Caco-2 (cell line): ENCODE measurements at regions of chr1 and their contacts with region 1.

Region 1: DNA sequence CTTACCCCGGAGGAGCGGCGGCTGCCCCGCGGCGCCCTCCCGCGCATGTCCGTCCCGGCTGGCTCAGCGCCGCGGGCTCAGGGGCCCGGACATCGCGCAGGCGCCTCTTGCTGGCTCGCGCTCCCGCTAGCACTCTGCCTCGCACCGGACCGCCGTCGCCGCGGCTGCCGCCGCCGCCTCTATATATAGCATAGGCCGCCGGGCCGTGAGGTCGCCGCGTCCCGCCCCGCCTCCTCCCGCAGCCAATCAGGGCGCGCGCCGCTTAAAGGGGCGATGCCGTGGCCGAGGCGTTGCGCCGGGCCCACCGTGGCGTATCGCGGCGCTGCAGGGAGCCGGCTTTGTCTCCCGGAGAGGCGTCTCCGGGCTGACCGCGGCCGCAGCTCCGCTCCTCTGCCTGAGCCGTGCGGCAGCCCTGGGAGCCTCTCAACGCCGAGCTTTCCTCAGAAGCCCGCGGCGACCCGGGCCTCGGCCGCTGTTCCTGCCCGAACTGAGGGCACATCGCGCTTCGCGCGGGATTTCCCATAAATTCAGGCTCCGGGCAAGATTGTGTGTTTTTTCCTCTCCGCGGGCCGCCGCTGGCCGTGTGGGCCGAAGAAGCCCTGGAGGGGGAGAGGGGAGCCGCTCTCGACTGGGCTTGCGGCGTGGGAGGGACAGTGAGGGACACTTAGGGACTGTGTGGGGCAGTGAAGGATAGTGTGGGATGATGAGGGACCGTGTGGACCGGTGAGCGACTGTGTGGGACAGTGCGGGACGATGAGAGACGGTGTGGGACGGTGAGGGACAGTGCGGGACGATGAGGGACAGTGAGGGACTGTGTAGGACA is at the start of gene ERRFI1:
- DNase-seq: peak; percentile 91 to 97
- H3K4me3 ChIP-seq: peak within 1 kb of the TSS; percentile 50
- H3K4me3 Mint-ChIP-seq: peak within 1 kb of the TSS; percentile 89
- H3K27ac Mint-ChIP-seq: peak within 1 kb of the TSS; percentile 88
- H3K4me1 ChIP-seq: peaks cover 43% of the 10 kb centered on the region
- H3K4me1 Mint-ChIP-seq: peaks cover 38% of the 10 kb centered on the region
- H3K27me3 ChIP-seq: no peaks in the 10 kb centered on the region
- H3K27me3 Mint-ChIP-seq: no peaks in the 10 kb centered on the region
- CTCF ChIP-seq: no peak
- total RNA-seq, gene ERRFI1: 37.2 and 40.9 TPM in 2 replicates

Region 2: DNA sequence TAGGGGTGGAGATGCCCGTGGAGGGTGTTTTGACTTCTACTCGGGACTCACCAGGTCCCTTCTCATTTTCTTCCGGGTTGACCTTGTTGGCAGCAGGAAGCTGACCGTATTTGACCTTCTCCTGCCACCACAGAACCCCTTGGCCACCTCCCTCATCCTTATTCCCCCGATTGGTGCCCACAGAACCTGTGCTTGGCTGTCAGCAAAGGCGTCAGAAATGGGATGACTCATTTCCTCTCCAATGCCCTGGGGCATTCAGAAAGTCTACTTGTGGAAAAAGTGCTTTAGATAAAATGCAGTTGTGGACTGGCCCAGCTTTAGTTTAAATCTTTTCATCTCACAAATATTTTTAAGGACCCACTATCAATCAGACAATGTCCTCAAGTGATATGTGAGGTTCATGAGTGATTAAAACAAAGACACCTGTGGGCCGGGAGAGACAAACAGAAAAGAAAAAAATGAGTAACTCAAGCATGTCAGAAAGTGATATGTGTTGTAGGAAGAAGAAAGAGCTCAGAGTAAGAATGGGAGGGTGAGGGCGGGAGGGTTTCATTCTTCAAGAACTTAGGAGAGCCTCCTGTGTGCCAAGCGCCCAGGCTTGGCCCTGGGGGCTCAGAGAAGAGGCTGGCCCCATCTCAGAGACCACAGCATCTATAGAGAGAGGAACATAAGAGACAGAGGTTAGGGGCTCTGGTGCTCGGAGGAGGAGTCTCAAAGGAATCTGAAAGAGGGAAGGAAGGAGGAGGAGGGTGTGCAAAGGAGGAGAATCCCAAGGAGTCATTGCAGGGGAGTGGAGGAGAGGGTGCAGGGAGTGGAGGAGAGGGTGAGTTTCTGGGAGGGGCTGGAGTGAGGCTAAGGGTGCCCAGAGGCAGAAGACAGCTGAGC is 476.8 kb before region 1 on chr1:
- CTCF ChIA-PET with region 1: no interaction called
- POLR2A ChIA-PET with region 1: no interaction called
- intact Hi-C with region 1: no loop called
- DNase-seq: no peak
- H3K4me3 ChIP-seq: no peak overlapping the region
- H3K4me3 Mint-ChIP-seq: no peak overlapping the region
- H3K27ac Mint-ChIP-seq: no peak overlapping the region
- H3K4me1 ChIP-seq: no peaks in the 10 kb centered on the region
- H3K4me1 Mint-ChIP-seq: peaks cover 7% of the 10 kb centered on the region
- H3K27me3 ChIP-seq: no peaks in the 10 kb centered on the region
- H3K27me3 Mint-ChIP-seq: peaks cover 8% of the 10 kb centered on the region
- CTCF ChIP-seq: no peak

Region 3: GRCh38 chr1:7983086-7983778 is 43.1 kb before region 1 on chr1:
- CTCF ChIA-PET with region 1: no interaction called
- POLR2A ChIA-PET with region 1: no interaction called
- intact Hi-C with region 1: loop called (anchors 5 kb)
- DNase-seq: no peak
- H3K4me3 ChIP-seq: no peak overlapping the region
- H3K4me3 Mint-ChIP-seq: no peak overlapping the region
- H3K27ac Mint-ChIP-seq: no peak overlapping the region
- H3K4me1 ChIP-seq: peaks cover 11% of the 10 kb centered on the region; the same call in 1 of the 2 replicates
- H3K4me1 Mint-ChIP-seq: peaks cover 7% of the 10 kb centered on the region
- H3K27me3 ChIP-seq: no peaks in the 10 kb centered on the region
- H3K27me3 Mint-ChIP-seq: no peaks in the 10 kb centered on the region
- CTCF ChIP-seq: no peak

Region 4: GRCh38 chr1:8061210-8061609 is 34.8 kb after region 1 on chr1:
- CTCF ChIA-PET with region 1: no interaction called
- POLR2A ChIA-PET with region 1: interaction called, 5 read pairs
- intact Hi-C with region 1: loop called (anchors 1 kb)
- DNase-seq: peak; percentile 80 to 84
- H3K4me3 ChIP-seq: no peak overlapping the region
- H3K4me3 Mint-ChIP-seq: peak overlapping the region; percentile 57
- H3K27ac Mint-ChIP-seq: peak overlapping the region; percentile 95
- H3K4me1 ChIP-seq: peaks cover 27% of the 10 kb centered on the region
- H3K4me1 Mint-ChIP-seq: peaks cover 8% of the 10 kb centered on the region
- H3K27me3 ChIP-seq: no peaks in the 10 kb centered on the region
- H3K27me3 Mint-ChIP-seq: no peaks in the 10 kb centered on the region
- CTCF ChIP-seq: no peak

Region 5: DNA sequence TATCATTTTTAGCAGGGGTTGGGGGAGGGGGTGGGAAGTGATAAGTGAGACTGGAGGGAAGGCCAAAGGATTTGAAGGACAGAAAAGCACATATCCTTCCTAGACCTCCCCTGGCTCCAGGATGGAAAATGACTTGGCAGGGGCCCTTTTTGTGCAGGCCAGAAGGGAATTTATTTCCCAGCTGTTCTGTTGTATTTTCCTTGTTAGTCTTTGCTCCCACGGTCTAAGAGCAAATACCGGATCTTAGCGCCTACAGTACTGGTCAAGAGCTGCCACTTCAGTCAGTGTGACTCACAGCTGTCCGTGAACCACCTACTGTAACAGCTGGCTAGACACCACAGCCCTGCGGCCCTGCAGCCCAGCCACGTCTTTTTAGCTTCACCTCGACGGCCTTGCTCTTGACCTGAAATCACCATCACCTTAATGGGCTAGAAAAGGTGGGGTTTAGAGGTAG is 50.8 kb after region 1 on chr1:
- CTCF ChIA-PET with region 1: no interaction called
- POLR2A ChIA-PET with region 1: interaction called, 3 read pairs
- intact Hi-C with region 1: loop called (anchors 5 kb)
- DNase-seq: peak; percentile 45 to 77
- H3K4me3 ChIP-seq: no peak overlapping the region
- H3K4me3 Mint-ChIP-seq: no peak overlapping the region
- H3K27ac Mint-ChIP-seq: peak overlapping the region; percentile 84
- H3K4me1 ChIP-seq: peaks cover 64% of the 10 kb centered on the region
- H3K4me1 Mint-ChIP-seq: peaks cover 53% of the 10 kb centered on the region
- H3K27me3 ChIP-seq: no peaks in the 10 kb centered on the region
- H3K27me3 Mint-ChIP-seq: no peaks in the 10 kb centered on the region
- CTCF ChIP-seq: no peak

Region 6: GRCh38 chr1:8169364-8170058 is 143.1 kb after region 1 on chr1:
- CTCF ChIA-PET with region 1: no interaction called
- POLR2A ChIA-PET with region 1: interaction called, 11 read pairs
- intact Hi-C with region 1: loop called (anchors 1 kb)
- DNase-seq: peak; percentile 72 to 82
- H3K4me3 ChIP-seq: no peak overlapping the region
- H3K4me3 Mint-ChIP-seq: peak overlapping the region; percentile 53
- H3K27ac Mint-ChIP-seq: peak overlapping the region; percentile 91
- H3K4me1 ChIP-seq: peaks cover 27% of the 10 kb centered on the region
- H3K4me1 Mint-ChIP-seq: peaks cover 11% of the 10 kb centered on the region
- H3K27me3 ChIP-seq: no peaks in the 10 kb centered on the region
- H3K27me3 Mint-ChIP-seq: no peaks in the 10 kb centered on the region
- CTCF ChIP-seq: no peak

Region 7: DNA sequence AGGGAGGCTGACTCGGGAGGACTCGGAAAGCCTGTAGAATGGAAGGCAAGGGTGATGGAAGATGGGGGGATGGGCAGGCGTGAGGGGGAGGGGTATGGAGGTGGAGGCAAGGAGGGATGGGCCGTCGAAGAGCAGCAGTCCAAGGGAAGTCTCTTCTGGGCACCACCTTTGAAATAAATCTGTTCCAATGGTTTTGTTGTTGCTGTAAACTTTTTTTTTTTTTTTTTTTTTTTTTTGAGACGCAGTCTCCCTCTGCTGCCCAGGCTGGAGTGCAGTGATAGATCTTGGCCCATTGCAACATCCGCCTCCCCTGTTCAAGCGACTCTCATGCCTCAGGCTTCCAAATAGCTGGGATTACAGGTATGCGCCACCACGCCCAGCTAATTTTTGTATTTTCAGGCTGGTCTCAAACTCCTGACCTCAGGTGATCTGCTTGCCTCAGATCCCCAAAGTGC is 212.5 kb after region 1 on chr1:
- CTCF ChIA-PET with region 1: no interaction called
- POLR2A ChIA-PET with region 1: no interaction called
- intact Hi-C with region 1: loop called (anchors 1 kb)
- DNase-seq: peak; percentile 73 to 85
- H3K4me3 ChIP-seq: no peak overlapping the region
- H3K4me3 Mint-ChIP-seq: peak overlapping the region; percentile 27
- H3K27ac Mint-ChIP-seq: peak overlapping the region; percentile 72
- H3K4me1 ChIP-seq: peaks cover 28% of the 10 kb centered on the region
- H3K4me1 Mint-ChIP-seq: peaks cover 27% of the 10 kb centered on the region
- H3K27me3 ChIP-seq: no peaks in the 10 kb centered on the region
- H3K27me3 Mint-ChIP-seq: no peaks in the 10 kb centered on the region
- CTCF ChIP-seq: no peak

Region 8: GRCh38 chr1:8259498-8260290 is 233.3 kb after region 1 on chr1:
- CTCF ChIA-PET with region 1: interaction called, 3 read pairs
- POLR2A ChIA-PET with region 1: no interaction called
- intact Hi-C with region 1: loop called (anchors 5 kb)
- DNase-seq: peak in 1 of 2 experiments; percentile 25
- H3K4me3 ChIP-seq: peak overlapping the region; percentile 11; the same call in 1 of the 2 replicates
- H3K4me3 Mint-ChIP-seq: peak overlapping the region; percentile 53
- H3K27ac Mint-ChIP-seq: peak overlapping the region; percentile 87
- H3K4me1 ChIP-seq: peaks cover 16% of the 10 kb centered on the region
- H3K4me1 Mint-ChIP-seq: peaks cover 26% of the 10 kb centered on the region
- H3K27me3 ChIP-seq: no peaks in the 10 kb centered on the region
- H3K27me3 Mint-ChIP-seq: no peaks in the 10 kb centered on the region
- CTCF ChIP-seq: no peak